Posterior vena cava (tissue), 2 donors: ENCODE measurements at regions of chr12 and their contacts with region 1.

Region 1: DNA sequence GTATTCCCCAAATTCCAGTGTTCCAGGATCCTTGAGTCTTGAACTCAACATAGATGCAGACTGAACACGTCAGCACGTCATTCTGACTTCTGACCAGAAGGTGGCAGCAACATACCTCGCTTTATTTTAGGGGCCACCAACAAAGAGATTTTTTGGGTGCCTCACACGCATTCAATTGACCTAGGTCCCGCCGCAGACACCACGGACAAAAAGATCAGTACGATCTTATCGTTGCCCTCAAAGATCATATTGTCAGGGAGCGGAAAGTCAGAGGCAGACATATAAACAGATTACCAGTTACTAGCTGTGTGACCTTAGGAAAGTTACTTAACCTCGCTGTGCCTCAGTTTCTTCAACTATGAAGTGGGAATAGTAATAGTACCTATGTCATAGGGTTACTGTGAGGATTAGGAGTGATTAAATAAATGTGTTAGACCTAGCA is 6.5 kb upstream of the PRPH start:
- DNase-seq: no peak

Region 2: DNA sequence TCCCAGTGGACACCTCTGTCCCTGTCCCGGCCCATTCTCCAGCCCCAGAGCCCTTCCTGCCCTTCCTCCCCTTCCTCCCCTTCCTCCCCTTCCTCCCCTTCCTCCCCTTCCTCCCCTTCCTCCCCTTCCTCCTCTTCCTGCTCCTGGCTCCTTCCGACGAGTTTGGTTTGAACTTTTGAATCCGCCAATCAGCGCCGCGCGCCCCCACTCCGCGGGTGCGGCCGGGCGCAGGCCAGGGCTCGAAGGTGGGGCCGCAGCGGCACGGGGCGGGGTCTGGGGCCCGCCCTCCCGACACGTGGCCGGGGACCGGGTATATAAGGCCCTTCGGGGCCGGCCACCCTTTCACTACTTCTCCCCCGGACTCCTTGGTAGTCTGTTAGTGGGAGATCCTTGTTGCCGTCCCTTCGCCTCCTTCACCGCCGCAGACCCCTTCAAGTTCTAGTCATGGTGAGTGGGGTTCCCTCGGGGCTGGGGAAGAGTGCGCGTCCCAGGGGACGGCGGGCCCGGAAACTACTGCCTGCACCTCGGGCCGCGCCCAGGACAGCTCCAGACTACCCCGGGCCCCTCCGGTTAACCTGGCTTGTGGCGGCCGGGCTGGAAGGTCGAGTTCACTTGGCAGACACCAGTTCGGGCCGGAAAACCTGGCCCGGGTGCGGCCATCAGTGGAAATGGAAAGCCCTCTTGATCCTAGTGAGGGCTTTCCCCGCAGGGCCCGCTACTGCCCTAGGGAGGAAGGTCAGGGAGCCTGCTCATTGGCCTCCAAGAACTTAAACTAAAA is 23.5 kb before region 1 on chr12 and contains the start of gene TUBA1C:
- intact Hi-C with region 1: no loop called
- DNase-seq: peak; percentile 98
- total RNA-seq, gene TUBA1C: 172 to 219 TPM

Region 3: GRCh38 chr12:49347384-49348237 is 59.2 kb after region 1 on chr12:
- intact Hi-C with region 1: loop called in 1 of 2 experiments (anchors 5 kb)
- DNase-seq: peak; percentile 91